Activated T-helper 1 cell treated with anti-CD3 and anti-CD28 coated beads, Interleukin-12 subunit alpha, Interleukin-12 subunit beta, Interleukin-2, Interleukin-4 antibody, amounts not matched to agents 30 ng/mL and 10 ng/mL and 1 ng/mL, durations not matched to agents 14 hours and 24 hours and 36 hours (primary cell): ENCODE measurements at regions of chr19 and their contacts with region 1.

Region 1: GRCh38 chr19:43668406-43669158 is 1.4 kb downstream of the PLAUR start:
- DNase-seq: peak; percentile 94
- H3K4me3 Mint-ChIP-seq: peak overlapping the region; percentile 93
- H3K27ac Mint-ChIP-seq: peak overlapping the region; percentile 81
- H3K4me1 Mint-ChIP-seq: peaks cover 39% of the 10 kb centered on the region
- H3K27me3 Mint-ChIP-seq: peaks cover 2% of the 10 kb centered on the region

Region 2: DNA sequence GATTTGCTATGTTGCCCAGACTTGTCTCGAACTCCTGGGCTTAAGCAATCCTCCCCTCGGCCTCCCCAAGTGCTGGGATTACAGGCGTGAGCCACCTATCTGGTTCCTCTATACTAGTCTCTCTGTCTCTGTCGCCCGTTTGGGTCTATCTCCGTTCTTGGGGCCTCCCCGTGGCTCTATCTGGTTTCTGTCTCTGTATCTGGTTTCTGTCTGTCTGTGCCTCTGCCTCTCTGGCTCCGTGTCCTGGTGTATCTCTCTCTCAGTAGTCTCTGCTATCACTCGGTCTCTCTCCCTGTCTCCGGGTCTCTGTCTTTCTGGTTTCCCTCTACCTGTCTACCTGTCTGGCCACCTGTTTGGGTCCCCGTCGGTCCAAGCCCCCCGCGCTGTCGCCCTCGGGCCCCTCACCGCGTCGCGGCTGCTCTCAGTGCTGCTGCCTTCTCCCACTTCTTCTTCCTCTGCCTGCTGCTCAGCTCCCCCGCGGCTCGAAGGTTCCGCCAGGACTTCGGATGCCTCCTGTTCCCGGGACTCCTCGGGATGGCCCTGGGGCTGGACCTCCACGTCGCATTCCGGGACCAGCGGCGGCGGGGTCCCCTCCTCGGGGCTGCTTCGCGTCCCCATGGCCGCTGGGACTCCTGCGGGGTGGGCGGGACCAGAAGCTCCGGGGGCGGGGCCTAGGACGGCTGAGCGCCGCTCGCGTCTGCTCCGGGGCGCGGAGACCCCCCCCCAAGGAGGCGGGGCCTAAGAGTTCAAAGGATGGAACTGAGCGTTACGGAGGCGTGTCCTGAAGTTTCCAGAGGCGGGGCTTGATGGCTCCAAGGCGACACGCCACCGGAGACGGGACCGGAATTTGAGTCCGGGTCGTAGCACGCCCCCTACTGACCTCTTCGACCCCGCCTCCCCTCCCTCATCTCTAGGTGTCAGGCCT is 164.8 kb before region 1 on chr19:
- intact Hi-C with region 1: loop called (anchors 1 kb)
- DNase-seq: peak; percentile 98
- H3K4me3 Mint-ChIP-seq: peak overlapping the region; percentile 88
- H3K27ac Mint-ChIP-seq: peak overlapping the region; percentile 82
- H3K4me1 Mint-ChIP-seq: peaks cover 18% of the 10 kb centered on the region
- H3K27me3 Mint-ChIP-seq: no peaks in the 10 kb centered on the region

Region 3: GRCh38 chr19:43595999-43596841 is 72.4 kb before region 1 on chr19 and contains the starts of genes IRGQ and ZNF576:
- intact Hi-C with region 1: loop called (anchors 1 kb)
- DNase-seq: peak; percentile 100
- H3K4me3 Mint-ChIP-seq: peak within 1 kb of the TSS; percentile 97
- H3K27ac Mint-ChIP-seq: peak within 1 kb of the TSS; percentile 97
- H3K4me1 Mint-ChIP-seq: peaks cover 39% of the 10 kb centered on the region
- H3K27me3 Mint-ChIP-seq: no peaks in the 10 kb centered on the region
- total RNA-seq, gene IRGQ: 33.5 and 34.9 TPM in 2 replicates
- total RNA-seq, gene ZNF576: 17.3 and 18.6 TPM in 2 replicates

Region 4: DNA sequence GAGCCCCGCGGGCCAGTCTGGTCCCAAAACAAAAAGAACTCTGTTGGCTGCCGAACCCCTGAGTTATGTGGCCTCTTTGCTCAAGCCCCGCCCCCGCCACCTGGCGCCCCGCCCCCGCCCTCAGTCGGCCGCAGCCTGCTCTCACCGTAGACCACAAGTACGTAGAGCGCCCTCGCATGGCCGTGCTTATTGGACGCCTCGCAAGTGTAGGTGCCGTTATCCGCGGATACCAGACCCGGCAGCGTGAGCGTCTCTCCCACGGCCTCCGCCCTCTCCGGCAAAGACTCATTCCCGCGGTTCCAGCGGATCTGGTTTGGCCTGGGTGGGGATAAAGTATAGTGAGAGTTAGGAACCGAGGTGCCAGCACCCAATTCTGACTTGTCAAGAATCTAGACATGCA is 43.6 kb before region 1 on chr19:
- intact Hi-C with region 1: no loop called
- DNase-seq: peak; percentile 80
- H3K4me3 Mint-ChIP-seq: no peak overlapping the region
- H3K27ac Mint-ChIP-seq: no peak overlapping the region
- H3K4me1 Mint-ChIP-seq: peaks cover 29% of the 10 kb centered on the region
- H3K27me3 Mint-ChIP-seq: peaks cover 7% of the 10 kb centered on the region

Region 5: GRCh38 chr19:43700395-43701000 is 31.9 kb after region 1 on chr19:
- intact Hi-C with region 1: loop called (anchors 1 kb)
- DNase-seq: no peak
- H3K4me3 Mint-ChIP-seq: peak overlapping the region; percentile 72
- H3K27ac Mint-ChIP-seq: peak overlapping the region; percentile 73
- H3K4me1 Mint-ChIP-seq: peaks cover 18% of the 10 kb centered on the region
- H3K27me3 Mint-ChIP-seq: peaks cover 11% of the 10 kb centered on the region

Region 6: DNA sequence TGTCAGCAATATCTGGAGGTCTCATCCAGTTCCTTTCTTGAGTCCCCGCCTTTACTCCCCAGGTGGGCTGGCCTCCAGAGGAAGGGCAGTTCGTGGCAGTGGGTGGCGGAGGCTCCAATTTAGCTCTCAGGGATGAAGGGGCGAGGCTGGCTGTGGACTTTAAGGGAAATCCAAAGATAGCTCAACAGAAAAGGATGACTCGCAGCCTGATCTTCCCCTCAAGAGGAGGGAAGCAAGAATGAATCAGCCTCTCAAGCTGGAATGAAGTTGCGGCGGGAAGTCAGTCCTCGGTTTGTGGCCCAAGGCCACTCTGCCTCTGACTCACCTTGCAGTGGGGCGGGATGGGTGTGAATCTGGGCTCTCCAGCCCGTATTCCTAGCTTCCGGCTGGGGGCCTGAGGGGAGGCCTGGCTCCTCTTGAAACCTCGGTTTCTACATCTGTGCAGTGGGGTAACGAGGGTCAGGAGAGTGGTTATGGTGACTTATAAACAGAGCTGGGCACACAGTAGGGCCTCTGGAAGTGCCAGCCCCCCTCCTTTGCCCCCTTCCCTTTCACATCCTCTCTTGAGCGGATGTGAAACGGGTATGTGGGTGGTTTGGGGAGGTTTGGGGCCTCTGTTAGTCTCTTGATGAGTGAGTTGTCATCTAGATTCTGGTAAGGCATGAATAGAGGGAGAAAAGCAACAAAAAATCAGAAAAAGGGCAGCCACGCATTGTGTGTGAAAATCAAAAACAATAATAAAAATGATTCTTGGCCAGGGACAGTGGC is 96.7 kb after region 1 on chr19:
- intact Hi-C with region 1: loop called (anchors 1 kb)
- DNase-seq: peak; percentile 81
- H3K4me3 Mint-ChIP-seq: peak overlapping the region; percentile 50
- H3K27ac Mint-ChIP-seq: peak overlapping the region; percentile 90
- H3K4me1 Mint-ChIP-seq: peaks cover 87% of the 10 kb centered on the region
- H3K27me3 Mint-ChIP-seq: no peaks in the 10 kb centered on the region

Region 7: GRCh38 chr19:43798546-43799409 is 130.2 kb after region 1 on chr19:
- intact Hi-C with region 1: no loop called
- DNase-seq: peak; percentile 34
- H3K4me3 Mint-ChIP-seq: peak overlapping the region; percentile 72
- H3K27ac Mint-ChIP-seq: peak overlapping the region; percentile 38
- H3K4me1 Mint-ChIP-seq: peaks cover 6% of the 10 kb centered on the region
- H3K27me3 Mint-ChIP-seq: peaks cover 14% of the 10 kb centered on the region

Region 8: DNA sequence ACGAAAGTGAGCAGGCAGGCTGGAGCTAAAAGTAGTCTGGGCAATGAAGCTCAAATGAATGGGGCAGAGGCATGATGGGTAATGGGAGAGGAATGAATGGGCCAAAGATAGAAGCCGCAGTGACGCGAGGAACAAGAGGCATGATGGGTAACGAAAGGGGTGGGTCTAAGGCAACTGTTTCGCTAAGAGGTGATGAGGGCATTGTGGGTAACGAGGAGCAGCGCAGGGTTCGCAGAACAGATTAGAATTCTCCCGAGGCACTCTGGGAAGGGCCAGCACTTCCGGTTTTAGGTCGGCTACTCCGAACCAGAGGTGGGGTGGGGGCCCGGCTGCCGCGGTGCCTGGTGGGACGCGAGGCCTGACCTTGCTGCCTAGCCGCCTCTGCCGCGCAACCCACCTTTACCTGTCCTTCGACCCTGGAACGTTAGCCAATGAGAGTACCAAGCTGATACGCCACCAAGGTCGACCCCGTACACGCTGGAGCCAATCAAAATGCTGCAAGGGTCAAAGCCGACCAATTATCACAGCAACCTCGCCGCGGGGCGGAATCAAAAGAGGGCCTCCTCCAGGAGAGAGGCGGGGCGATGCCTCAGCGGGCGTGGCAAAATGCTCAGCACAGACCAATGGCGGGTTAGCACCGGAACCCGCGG is 1221.9 kb after region 1 on chr19:
- intact Hi-C with region 1: loop called (anchors 2 kb)
- DNase-seq: peak; percentile 100
- H3K4me3 Mint-ChIP-seq: peak overlapping the region; percentile 86
- H3K27ac Mint-ChIP-seq: peak overlapping the region; percentile 96
- H3K4me1 Mint-ChIP-seq: peaks cover 30% of the 10 kb centered on the region
- H3K27me3 Mint-ChIP-seq: no peaks in the 10 kb centered on the region